AG04450 (cell line): ENCODE measurements at regions of chr7 and their contacts with region 1.

Region 1: DNA sequence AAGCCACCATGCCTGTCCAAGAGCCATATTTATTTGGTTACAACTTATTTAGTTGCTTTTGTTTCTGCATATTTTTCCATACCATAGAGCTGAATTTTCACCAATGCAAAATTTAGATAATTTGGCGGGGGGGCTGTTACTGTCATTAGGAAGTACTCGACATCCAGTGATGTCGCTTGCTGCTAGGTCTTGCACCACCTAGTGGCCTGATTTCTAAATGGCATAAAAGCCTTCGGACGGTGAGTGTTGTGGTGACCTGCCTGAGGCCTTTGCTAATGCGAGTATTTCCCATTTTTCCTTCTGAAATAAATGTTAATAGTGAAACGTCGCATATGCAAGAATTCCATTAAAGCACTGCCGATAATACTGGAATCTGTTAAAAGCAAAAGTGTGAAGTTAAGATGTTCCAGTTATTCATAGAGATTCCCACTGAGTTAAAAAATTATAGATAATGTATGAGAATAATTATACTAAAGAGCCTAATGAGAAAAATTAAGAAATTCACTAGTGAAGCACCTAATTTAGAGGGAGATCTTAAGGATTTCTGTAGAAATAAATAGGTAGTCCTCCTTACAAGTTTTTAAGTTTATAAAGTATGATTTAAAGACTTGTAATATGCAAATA is 86.1 kb upstream of the DNAJB6 start:
- DNase-seq: no peak
- H3K4me3 ChIP-seq: no peak overlapping the region
- H3K27ac ChIP-seq: no peak overlapping the region
- H3K27me3 ChIP-seq: no peaks in the 10 kb centered on the region
- CTCF ChIP-seq: peak; percentile 80

Region 2: DNA sequence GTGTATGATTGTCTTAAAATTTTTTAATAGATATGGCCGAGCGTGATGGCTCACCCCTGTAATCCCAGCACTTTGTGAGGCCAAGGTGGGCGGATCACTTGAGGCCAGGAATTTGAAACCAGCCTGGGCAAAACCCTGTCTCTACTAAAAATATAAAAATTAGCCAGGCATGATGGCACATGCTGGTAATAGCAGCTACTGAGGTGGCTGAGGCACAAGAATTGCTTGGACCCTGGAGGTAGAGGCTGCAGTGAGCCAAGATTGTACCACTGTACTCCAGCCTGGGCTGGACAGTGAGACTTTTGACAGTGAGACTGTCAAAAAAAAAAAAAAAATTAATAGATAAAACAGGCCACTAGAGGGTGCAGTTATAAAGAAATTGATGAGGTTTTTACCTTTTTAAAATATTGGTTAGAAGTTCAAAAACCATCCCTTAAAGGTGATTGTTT is 280.7 kb before region 1 on chr7:
- CTCF ChIA-PET with region 1: interaction called, 11 read pairs
- POLR2A ChIA-PET with region 1: no interaction called
- DNase-seq: no peak
- H3K4me3 ChIP-seq: no peak overlapping the region
- H3K27ac ChIP-seq: no peak overlapping the region
- H3K27me3 ChIP-seq: no peaks in the 10 kb centered on the region
- CTCF ChIP-seq: peak; percentile 33; the same call in 1 of the 2 replicates

Region 3: GRCh38 chr7:157228864-157229422 is 21.8 kb before region 1 on chr7:
- CTCF ChIA-PET with region 1: interaction called, 14 read pairs
- POLR2A ChIA-PET with region 1: no interaction called
- DNase-seq: no peak
- H3K4me3 ChIP-seq: no peak overlapping the region
- H3K27ac ChIP-seq: no peak overlapping the region
- H3K27me3 ChIP-seq: no peaks in the 10 kb centered on the region
- CTCF ChIP-seq: peak; percentile 59

Region 4: GRCh38 chr7:157238087-157238486 is 12.6 kb before region 1 on chr7:
- CTCF ChIA-PET with region 1: interaction called, 26 read pairs
- POLR2A ChIA-PET with region 1: no interaction called
- DNase-seq: no peak
- H3K4me3 ChIP-seq: no peak overlapping the region
- H3K27ac ChIP-seq: no peak overlapping the region
- H3K27me3 ChIP-seq: no peaks in the 10 kb centered on the region
- CTCF ChIP-seq: no peak

Region 5: GRCh38 chr7:157263156-157263555 is 12.4 kb after region 1 on chr7:
- CTCF ChIA-PET with region 1: interaction called, 24 read pairs
- POLR2A ChIA-PET with region 1: interaction called, 3 read pairs
- DNase-seq: no peak
- H3K4me3 ChIP-seq: no peak overlapping the region
- H3K27ac ChIP-seq: no peak overlapping the region
- H3K27me3 ChIP-seq: no peaks in the 10 kb centered on the region
- CTCF ChIP-seq: no peak